Right cardiac atrium (tissue), 5 donors: ENCODE measurements at regions of chr12 and their contacts with region 1.

Region 1: GRCh38 chr12:13734584-13735152 is 246.7 kb downstream of the GRIN2B start:
- DNase-seq: no peak
- ATAC-seq: no peak
- H3K4me3 ChIP-seq: no peak overlapping the region
- H3K27ac ChIP-seq: no peak overlapping the region
- H3K4me1 ChIP-seq: no peaks in the 10 kb centered on the region
- H3K27me3 ChIP-seq: no peaks in the 10 kb centered on the region

Region 2: DNA sequence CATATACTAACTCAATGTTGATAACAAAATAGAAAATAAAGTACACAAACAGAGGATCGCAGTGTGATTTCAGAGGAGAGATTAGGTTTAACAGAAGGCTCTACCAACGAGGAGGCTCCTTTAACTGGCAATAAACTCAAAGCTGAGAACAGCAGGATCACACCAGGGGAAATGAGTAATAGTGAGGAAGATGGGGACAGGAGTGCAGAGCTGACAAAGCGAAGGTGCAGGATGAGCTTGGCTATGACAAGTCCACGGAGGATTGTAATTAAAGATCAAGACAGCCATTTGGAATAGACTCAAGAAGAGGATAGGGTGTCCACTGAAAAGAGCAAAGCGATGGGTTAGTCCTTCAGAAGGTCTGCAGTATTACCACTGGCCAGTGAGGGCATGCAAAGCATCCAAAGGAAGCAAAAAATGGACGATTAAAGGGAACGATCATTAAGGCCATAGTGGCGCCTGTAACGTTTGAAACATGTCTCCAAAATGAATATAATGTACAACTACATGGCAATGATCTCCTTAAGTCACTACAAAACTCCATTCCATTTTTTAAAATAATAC is 161.5 kb after region 1 on chr12:
- intact Hi-C with region 1: no loop called
- DNase-seq: no peak
- ATAC-seq: no peak
- H3K4me3 ChIP-seq: no peak overlapping the region
- H3K27ac ChIP-seq: no peak overlapping the region
- H3K4me1 ChIP-seq: no peaks in the 10 kb centered on the region
- H3K27me3 ChIP-seq: no peaks in the 10 kb centered on the region

Region 3: GRCh38 chr12:13941258-13942249 is 206.9 kb after region 1 on chr12:
- intact Hi-C with region 1: loop called (anchors 5 kb)
- DNase-seq: peak in 1 of 3 donors; percentile 55
- ATAC-seq: peak; percentile 68 to 76
- H3K4me3 ChIP-seq: no peak overlapping the region
- H3K27ac ChIP-seq: no peak overlapping the region
- H3K4me1 ChIP-seq: no peaks in the 10 kb centered on the region
- H3K27me3 ChIP-seq: no peaks in the 10 kb centered on the region